ENCODE measurements at regions of chr16 and their contacts with region 1.

Region 1: DNA sequence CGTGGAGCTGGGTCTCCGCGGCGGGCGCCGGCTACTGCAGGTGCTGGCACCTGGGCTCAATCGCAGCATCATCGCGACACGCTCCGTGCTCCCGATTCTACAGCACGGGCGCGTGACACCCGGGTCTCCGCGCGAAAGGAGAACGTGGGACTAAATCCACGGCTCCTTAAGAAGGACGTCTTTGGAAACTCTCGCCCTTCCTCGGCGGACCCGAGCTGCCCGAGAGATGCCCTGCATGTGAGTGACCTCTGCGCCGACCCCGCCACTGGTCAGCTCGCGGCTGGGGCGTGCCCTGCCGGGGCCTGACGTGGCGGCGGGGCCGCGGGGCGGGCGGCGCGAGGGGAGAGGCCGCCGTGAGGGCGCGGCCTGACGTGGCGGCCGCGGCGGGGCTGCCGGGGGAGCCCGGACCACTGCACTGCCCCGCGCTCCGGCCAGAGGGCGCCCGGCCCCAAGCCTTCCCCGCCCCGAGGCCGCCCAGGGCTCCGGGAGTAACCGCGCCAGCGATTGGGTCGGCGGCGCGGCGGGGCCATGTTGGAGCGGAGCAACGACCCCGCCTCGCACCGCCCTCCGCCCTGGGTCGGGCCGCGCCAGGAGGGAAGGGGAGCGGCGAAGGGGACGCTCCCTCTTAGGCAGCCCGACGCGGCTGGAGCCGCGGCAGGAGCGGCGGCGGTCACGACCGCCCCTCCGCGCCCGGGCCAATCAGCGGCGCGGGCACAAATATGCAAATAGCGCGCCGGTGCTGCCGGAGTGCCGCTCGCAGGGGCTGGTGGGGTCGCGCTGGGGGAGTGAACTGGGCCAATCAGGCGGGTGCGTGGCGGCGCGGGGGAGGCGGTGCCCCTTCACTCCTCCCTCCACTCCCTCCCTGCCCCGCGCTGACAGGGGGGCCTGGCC is 75.6 kb downstream of the CHD9 start:
- DNase-seq: peak; percentile 86 to 97 (median 93)
- ATAC-seq: peak; percentile 91
- H3K4me3 ChIP-seq: peak overlapping the region; percentile 92
- H3K4me3 Mint-ChIP-seq: peak overlapping the region; percentile 91
- H3K27ac ChIP-seq: peak overlapping the region; percentile 63 to 71
- H3K27ac Mint-ChIP-seq: peak overlapping the region; percentile 92
- H3K4me1 ChIP-seq: peaks cover 13% of the 10 kb centered on the region
- H3K4me1 Mint-ChIP-seq: peaks cover 12% of the 10 kb centered on the region
- H3K27me3 ChIP-seq: no peaks in the 10 kb centered on the region
- H3K27me3 Mint-ChIP-seq: no peaks in the 10 kb centered on the region
- CTCF ChIP-seq: no peak

Region 2: DNA sequence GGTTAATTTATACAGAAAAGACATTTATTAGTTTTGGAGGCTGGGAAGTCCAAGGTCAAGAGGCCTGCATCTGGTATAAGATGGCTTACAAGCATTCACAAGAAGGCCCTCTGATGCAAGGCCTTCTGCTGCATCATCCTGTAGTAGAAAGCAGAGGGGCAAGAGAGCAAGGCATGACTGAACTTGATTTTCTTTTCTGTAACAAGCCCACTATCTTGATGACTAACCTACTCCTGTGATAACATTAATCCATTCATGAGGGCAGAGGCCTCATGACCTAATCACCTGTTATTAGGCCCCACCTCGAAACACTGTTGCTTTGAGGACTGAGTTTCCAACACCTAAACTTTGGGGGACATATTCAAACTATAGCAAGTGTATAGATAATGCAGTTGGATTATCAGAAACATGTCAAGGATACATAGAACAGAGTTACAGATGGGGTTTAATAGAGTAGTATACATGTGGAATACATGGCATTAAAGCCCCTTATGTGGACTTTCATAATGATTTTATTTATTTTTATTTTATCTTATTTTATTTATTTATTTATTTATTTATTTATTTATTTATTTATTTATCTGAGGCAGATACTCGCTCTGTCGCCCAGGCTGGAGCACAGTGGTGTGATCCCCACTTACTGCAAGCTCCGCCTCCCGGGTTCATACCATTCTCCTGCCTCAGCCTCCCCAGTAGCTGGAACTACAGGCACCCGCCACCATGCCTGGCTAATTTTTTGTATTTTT is 12.6 kb after region 1 on chr16:
- CTCF ChIA-PET with region 1: no interaction called
- POLR2A ChIA-PET with region 1: no interaction called
- intact Hi-C with region 1: no loop called
- DNase-seq: no peak
- ATAC-seq: no peak
- H3K4me3 ChIP-seq: no peak overlapping the region
- H3K4me3 Mint-ChIP-seq: no peak overlapping the region
- H3K27ac ChIP-seq: no peak overlapping the region
- H3K27ac Mint-ChIP-seq: no peak overlapping the region
- H3K4me1 ChIP-seq: peaks cover 3% of the 10 kb centered on the region
- H3K4me1 Mint-ChIP-seq: peaks cover 4% of the 10 kb centered on the region
- H3K27me3 ChIP-seq: no peaks in the 10 kb centered on the region
- H3K27me3 Mint-ChIP-seq: no peaks in the 10 kb centered on the region
- CTCF ChIP-seq: no peak

Region 3: DNA sequence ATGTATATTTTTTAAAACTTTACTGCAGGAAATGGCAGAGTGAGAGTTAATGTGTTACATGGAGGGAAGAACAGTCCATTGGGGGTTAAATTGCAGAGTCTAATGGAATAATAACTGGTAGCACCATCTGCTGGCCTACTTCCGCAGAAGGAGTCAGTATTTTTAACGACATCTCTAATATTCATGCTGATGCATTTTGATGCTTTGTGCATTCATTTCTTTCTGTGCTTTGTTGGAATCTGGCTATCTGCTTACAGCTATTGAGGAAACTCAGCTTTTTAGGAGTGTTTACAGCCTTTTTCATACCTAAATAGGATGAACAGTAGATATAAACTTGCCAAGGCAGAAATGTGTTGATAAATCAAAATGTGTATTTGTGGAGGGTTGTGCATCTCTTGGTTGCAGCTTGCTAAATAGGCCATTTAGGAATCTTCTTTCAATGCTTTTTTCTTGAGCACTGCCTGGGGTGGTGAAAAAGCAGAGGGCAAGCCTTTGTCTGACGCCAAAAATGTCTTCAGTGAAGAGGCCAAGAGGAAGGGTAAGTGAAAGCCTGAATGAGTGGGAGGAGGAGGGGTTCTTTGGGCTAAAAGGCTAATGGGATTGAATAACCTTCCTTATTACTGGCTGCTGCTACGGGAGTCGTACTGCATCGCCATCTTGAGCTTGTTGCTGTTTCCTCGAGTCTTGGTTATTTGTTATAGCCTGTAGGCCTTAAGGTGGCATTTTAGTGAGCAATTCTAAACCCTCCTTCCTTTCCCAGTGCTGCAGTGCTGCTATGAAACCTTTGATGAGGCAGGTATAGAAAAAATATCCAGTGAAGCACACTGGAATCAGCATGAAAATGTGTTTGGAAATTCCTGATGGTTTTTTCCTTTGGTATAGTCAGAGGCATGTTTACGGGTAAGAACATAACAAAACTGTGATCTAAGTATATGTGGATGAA is 77.7 kb after region 1 on chr16:
- CTCF ChIA-PET with region 1: interaction called, 3 read pairs
- POLR2A ChIA-PET with region 1: no interaction called
- intact Hi-C with region 1: loop called in 1 of 2 experiments (anchors 5 kb)
- DNase-seq: peak in 4 of 14 experiments; percentile 19 to 52 (median 40)
- ATAC-seq: peak; percentile 68
- H3K4me3 ChIP-seq: peak overlapping the region; percentile 12
- H3K4me3 Mint-ChIP-seq: peak overlapping the region; percentile 82
- H3K27ac ChIP-seq: no peak overlapping the region
- H3K27ac Mint-ChIP-seq: peak overlapping the region; percentile 82
- H3K4me1 ChIP-seq: no peaks in the 10 kb centered on the region
- H3K4me1 Mint-ChIP-seq: peaks cover 33% of the 10 kb centered on the region
- H3K27me3 ChIP-seq: no peaks in the 10 kb centered on the region
- H3K27me3 Mint-ChIP-seq: no peaks in the 10 kb centered on the region
- CTCF ChIP-seq: peak; percentile 53

Region 4: GRCh38 chr16:53435066-53435688 is 304.8 kb after region 1 on chr16:
- CTCF ChIA-PET with region 1: no interaction called
- POLR2A ChIA-PET with region 1: no interaction called
- intact Hi-C with region 1: loop called in 1 of 2 experiments (anchors 2 kb)
- DNase-seq: peak; percentile 36 to 86 (median 55)
- ATAC-seq: peak; percentile 64
- H3K4me3 ChIP-seq: peak overlapping the region; percentile 86
- H3K4me3 Mint-ChIP-seq: peak overlapping the region; percentile 96
- H3K27ac ChIP-seq: peak overlapping the region; percentile 88 to 98
- H3K27ac Mint-ChIP-seq: peak overlapping the region; percentile 96
- H3K4me1 ChIP-seq: peaks cover 26% of the 10 kb centered on the region
- H3K4me1 Mint-ChIP-seq: peaks cover 53% of the 10 kb centered on the region
- H3K27me3 ChIP-seq: no peaks in the 10 kb centered on the region
- H3K27me3 Mint-ChIP-seq: no peaks in the 10 kb centered on the region
- CTCF ChIP-seq: no peak

Region 5: DNA sequence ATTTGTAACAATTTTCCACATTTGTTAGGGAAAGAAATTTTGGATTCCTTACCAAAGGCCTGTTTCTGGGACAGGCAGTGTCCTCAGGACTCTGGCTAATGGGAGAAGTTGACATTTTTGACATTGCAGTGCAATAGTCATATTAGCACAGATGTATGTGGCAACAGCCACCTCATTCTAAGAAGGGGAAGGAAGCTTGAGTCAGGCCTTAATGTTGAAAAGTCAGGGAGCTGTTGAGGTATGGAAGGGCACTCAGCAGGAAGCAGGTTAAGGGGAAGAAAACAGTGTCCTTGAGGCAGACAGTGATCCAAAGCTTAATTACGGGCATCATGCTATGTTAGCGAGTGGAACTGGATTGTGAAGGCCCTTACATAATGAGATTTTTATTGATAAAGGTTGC is 351.7 kb after region 1 on chr16:
- CTCF ChIA-PET with region 1: no interaction called
- POLR2A ChIA-PET with region 1: no interaction called
- intact Hi-C with region 1: no loop called
- DNase-seq: peak in 2 of 14 experiments; percentile 32 to 45
- ATAC-seq: no peak
- H3K4me3 ChIP-seq: no peak overlapping the region
- H3K4me3 Mint-ChIP-seq: no peak overlapping the region
- H3K27ac ChIP-seq: no peak overlapping the region
- H3K27ac Mint-ChIP-seq: peak overlapping the region; percentile 74
- H3K4me1 ChIP-seq: peaks cover 7% of the 10 kb centered on the region
- H3K4me1 Mint-ChIP-seq: peaks cover 62% of the 10 kb centered on the region
- H3K27me3 ChIP-seq: no peaks in the 10 kb centered on the region
- H3K27me3 Mint-ChIP-seq: no peaks in the 10 kb centered on the region
- CTCF ChIP-seq: no peak

Region 6: DNA sequence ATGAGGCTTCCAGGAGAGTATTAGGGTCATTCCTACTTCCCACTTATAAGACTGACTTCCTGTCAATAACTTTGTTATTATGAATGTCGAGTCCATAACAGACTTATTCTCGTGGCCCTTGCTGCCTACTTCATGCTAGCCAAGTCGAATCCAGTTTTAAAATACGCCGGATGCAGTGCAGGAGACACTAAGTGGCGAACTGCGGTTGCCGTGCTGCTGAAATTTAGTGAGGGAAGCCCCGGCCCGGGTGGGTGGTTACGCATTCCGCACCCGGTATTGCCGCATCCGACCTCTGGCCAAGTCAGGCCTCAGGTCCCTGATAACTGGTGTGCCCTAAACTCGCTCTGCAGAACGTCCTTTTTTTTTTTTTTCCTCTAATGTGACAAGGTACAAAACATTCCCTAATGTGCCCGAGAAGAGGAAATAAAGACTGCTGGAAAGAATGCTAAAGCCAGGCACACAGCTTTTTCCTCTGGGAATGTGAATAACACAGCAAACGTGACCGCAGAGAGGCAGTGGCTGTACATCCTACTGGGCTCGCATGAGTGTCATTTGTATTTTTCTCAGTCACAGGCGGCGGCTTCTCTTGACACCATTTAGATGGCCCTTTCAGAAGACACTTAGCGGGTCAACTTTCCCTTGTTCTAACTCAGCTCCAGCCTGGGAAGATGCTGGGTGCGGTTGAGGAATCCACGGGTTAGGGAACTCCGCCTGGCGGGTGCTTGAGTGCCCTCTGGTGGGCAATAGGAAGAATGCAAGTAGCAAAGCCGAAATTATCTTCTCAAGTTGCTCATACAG is 379.7 kb after region 1 on chr16:
- CTCF ChIA-PET with region 1: no interaction called
- POLR2A ChIA-PET with region 1: no interaction called
- intact Hi-C with region 1: loop called in 1 of 2 experiments (anchors 2 kb)
- DNase-seq: peak in 13 of 14 experiments; percentile 17 to 83 (median 36)
- ATAC-seq: peak; percentile 71
- H3K4me3 ChIP-seq: peak overlapping the region; percentile 33
- H3K4me3 Mint-ChIP-seq: peak overlapping the region; percentile 72
- H3K27ac ChIP-seq: no peak overlapping the region
- H3K27ac Mint-ChIP-seq: peak overlapping the region; percentile 11
- H3K4me1 ChIP-seq: peaks cover 28% of the 10 kb centered on the region
- H3K4me1 Mint-ChIP-seq: peaks cover 35% of the 10 kb centered on the region
- H3K27me3 ChIP-seq: no peaks in the 10 kb centered on the region
- H3K27me3 Mint-ChIP-seq: no peaks in the 10 kb centered on the region
- CTCF ChIP-seq: peak; percentile 97

Region 7: GRCh38 chr16:54143934-54144629 is 1013.7 kb after region 1 on chr16:
- CTCF ChIA-PET with region 1: no interaction called
- POLR2A ChIA-PET with region 1: no interaction called
- intact Hi-C with region 1: no loop called
- DNase-seq: no peak
- ATAC-seq: no peak
- H3K4me3 ChIP-seq: no peak overlapping the region
- H3K4me3 Mint-ChIP-seq: no peak overlapping the region
- H3K27ac ChIP-seq: no peak overlapping the region
- H3K27ac Mint-ChIP-seq: no peak overlapping the region
- H3K4me1 ChIP-seq: no peaks in the 10 kb centered on the region
- H3K4me1 Mint-ChIP-seq: no peaks in the 10 kb centered on the region
- H3K27me3 ChIP-seq: peaks cover 0 to 4% of the 10 kb centered on the region in 2 experiments
- H3K27me3 Mint-ChIP-seq: peaks cover 14% of the 10 kb centered on the region
- CTCF ChIP-seq: no peak